Heart right ventricle (tissue), 16 donors: ENCODE measurements at regions of chr15 and their contacts with region 1.

Region 1: DNA sequence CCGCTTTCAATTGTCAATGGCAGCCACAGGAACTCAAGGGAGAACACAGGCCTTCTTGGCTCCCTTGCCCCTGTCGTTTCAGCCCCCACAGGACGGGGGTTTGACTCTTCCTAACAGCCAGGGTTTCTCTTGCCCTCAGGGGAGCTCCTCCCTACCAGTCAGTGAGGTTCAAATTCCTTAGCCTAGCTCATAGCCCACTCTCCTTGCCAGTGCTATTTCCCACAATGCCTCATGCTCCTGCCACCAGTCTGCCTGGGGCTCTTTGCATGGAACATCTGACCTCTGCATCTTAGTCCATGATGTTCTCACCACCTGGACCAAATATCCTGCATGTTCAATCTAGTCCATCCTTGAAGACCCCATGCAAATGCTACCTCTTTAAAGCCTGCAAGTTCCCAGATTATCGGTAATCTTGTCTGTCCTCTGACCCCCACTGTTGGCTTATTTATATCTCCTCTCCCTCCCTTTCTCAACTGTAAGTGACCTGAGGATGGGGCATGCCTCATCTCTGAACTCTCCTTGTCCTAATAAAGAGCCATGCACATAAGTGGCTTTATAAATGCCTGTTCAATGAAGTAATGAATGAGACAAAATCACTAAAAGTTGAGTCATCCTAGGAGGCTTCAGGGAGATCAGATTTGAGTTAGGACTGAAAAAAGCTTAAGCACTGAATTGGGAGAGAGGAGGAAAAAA is 78.0 kb downstream of the MYO1E start:
- DNase-seq: no peak
- ATAC-seq: no peak
- H3K4me3 ChIP-seq: no peak overlapping the region
- H3K27ac ChIP-seq: peak overlapping the region in 8 of 10 donors; percentile 5 to 67 (median 60)
- H3K4me1 ChIP-seq: peaks cover 7 to 89% (median 66%) of the 10 kb centered on the region in 9 donors
- H3K27me3 ChIP-seq: no peaks in the 10 kb centered on the region
- CTCF ChIP-seq: no peak

Region 2: GRCh38 chr15:59244337-59244736 is 50.4 kb before region 1 on chr15:
- intact Hi-C with region 1: no loop called
- DNase-seq: no peak
- ATAC-seq: no peak
- H3K4me3 ChIP-seq: no peak overlapping the region
- H3K27ac ChIP-seq: no peak overlapping the region
- H3K4me1 ChIP-seq: peaks cover 0 to 35% (median 10%) of the 10 kb centered on the region in 9 donors
- H3K27me3 ChIP-seq: no peaks in the 10 kb centered on the region
- CTCF ChIP-seq: no peak

Region 3: GRCh38 chr15:59255647-59256380 is 38.9 kb before region 1 on chr15:
- intact Hi-C with region 1: loop called in 1 of 10 experiments (anchors 5 kb)
- DNase-seq: no peak
- ATAC-seq: no peak
- H3K4me3 ChIP-seq: no peak overlapping the region
- H3K27ac ChIP-seq: no peak overlapping the region
- H3K4me1 ChIP-seq: no peaks in the 10 kb centered on the region
- H3K27me3 ChIP-seq: no peaks in the 10 kb centered on the region
- CTCF ChIP-seq: no peak